ENCODE measurements at regions of chr1 and their contacts with region 1.

Region 1: GRCh38 chr1:202009326-202010179 is 834 bp upstream of the ELF3 start:
- DNase-seq: peak; percentile 84 to 90 (median 86)
- ATAC-seq: peak; percentile 89
- H3K4me3 ChIP-seq: no peak overlapping the region
- H3K27ac ChIP-seq: no peak overlapping the region
- H3K4me1 ChIP-seq: peaks cover 15 to 34% of the 10 kb centered on the region in 2 experiments; a peak in 4 of 5 replicates
- H3K27me3 ChIP-seq: peaks cover 0 to 9% of the 10 kb centered on the region in 2 experiments; a peak in 1 of 5 replicates
- CTCF ChIP-seq: peak; percentile 92 to 98 (median 96)
- EP300 ChIP-seq: no peak
- POLR2A ChIP-seq: no peak
- RAD21 ChIP-seq: peak; percentile 94 to 97

Region 2: GRCh38 chr1:202076050-202076511 is 66.5 kb after region 1 on chr1:
- CTCF ChIA-PET with region 1: no interaction called
- POLR2A ChIA-PET with region 1: interaction called, 3 read pairs
- in situ Hi-C with region 1: no loop called
- intact Hi-C with region 1: loop called (anchors 5 kb)
- DNase-seq: peak; percentile 56 to 82 (median 76)
- ATAC-seq: peak; percentile 75
- H3K4me3 ChIP-seq: no peak overlapping the region
- H3K27ac ChIP-seq: peak overlapping the region; percentile 37; the same call in 2 of the 3 replicates
- H3K4me1 ChIP-seq: peaks cover 22 to 28% of the 10 kb centered on the region in 2 experiments
- H3K27me3 ChIP-seq: no peaks in the 10 kb centered on the region
- CTCF ChIP-seq: no peak
- EP300 ChIP-seq: peak; percentile 99
- POLR2A ChIP-seq: no peak
- RAD21 ChIP-seq: peak; percentile 17 to 25

Region 3: DNA sequence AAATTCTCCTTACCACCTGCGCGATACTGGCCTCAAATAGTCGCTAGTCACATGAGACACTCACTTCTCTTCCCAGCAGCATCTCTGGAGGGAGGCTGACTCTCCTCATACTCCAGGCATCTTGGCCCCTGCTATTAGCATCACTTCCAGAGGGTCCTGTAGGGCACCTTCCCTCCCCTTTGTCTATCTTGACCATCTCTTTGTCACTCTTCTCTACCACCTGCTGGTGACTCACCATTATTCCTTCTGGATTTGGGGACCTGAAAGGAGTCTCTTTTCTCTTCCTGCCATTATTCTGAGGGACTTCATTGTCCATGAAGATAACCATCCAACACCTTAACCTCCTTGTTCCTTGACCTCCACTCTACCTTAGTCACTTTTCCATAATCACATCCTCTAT is 81.4 kb after region 1 on chr1:
- CTCF ChIA-PET with region 1: interaction called, 11 read pairs
- POLR2A ChIA-PET with region 1: no interaction called
- in situ Hi-C with region 1: no loop called
- intact Hi-C with region 1: no loop called
- DNase-seq: peak in 1 of 4 experiments; percentile 34
- ATAC-seq: no peak; the same call in 2 of the 3 replicates
- H3K4me3 ChIP-seq: no peak overlapping the region
- H3K27ac ChIP-seq: no peak overlapping the region
- H3K4me1 ChIP-seq: peaks cover 0 to 4% of the 10 kb centered on the region in 2 experiments; a peak in 1 of 5 replicates
- H3K27me3 ChIP-seq: peaks cover 11 to 34% of the 10 kb centered on the region in 2 experiments
- CTCF ChIP-seq: peak in 2 of 3 experiments; percentile 23 to 38; a peak in 2 of 6 replicates
- EP300 ChIP-seq: no peak
- POLR2A ChIP-seq: no peak
- RAD21 ChIP-seq: peak; percentile 32 to 54; a peak in 3 of 4 replicates

Region 4: DNA sequence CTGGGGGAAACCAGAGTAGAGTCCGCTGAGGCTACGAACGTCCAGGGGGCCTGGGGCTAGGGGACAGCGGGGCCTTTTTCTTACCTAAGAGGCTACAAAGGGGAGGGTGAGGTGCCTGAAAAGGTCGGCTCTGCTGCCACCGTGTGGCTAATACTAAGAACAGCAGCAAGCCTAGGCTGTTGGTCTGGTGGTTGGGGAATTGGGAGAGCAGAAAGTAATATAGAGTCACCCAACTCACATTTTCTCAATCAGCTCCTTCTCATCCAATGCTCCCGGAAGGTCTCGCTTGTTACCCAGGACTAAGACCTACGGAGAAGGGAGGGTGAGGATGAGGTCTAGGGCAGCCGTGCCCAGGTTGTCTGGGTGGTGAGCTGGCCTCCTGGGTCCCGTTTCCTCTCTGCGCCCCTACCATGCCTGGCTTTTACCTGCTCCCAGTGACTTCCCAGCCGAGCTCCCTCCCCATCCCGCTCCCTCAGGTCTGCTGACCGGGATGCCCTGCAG is 125.7 kb after region 1 on chr1:
- CTCF ChIA-PET with region 1: interaction called, 13 read pairs
- POLR2A ChIA-PET with region 1: no interaction called
- in situ Hi-C with region 1: no loop called
- intact Hi-C with region 1: no loop called
- DNase-seq: peak; percentile 84 to 92 (median 90)
- ATAC-seq: peak; percentile 95
- H3K4me3 ChIP-seq: no peak overlapping the region
- H3K27ac ChIP-seq: no peak overlapping the region
- H3K4me1 ChIP-seq: peaks cover 0 to 17% of the 10 kb centered on the region in 2 experiments; a peak in 2 of 5 replicates
- H3K27me3 ChIP-seq: no peaks in the 10 kb centered on the region
- CTCF ChIP-seq: peak; percentile 83 to 95 (median 86)
- EP300 ChIP-seq: no peak
- POLR2A ChIP-seq: no peak
- RAD21 ChIP-seq: peak; percentile 65 to 70